ENCODE measurements at regions of chr12 and their contacts with region 1.

Region 1: DNA sequence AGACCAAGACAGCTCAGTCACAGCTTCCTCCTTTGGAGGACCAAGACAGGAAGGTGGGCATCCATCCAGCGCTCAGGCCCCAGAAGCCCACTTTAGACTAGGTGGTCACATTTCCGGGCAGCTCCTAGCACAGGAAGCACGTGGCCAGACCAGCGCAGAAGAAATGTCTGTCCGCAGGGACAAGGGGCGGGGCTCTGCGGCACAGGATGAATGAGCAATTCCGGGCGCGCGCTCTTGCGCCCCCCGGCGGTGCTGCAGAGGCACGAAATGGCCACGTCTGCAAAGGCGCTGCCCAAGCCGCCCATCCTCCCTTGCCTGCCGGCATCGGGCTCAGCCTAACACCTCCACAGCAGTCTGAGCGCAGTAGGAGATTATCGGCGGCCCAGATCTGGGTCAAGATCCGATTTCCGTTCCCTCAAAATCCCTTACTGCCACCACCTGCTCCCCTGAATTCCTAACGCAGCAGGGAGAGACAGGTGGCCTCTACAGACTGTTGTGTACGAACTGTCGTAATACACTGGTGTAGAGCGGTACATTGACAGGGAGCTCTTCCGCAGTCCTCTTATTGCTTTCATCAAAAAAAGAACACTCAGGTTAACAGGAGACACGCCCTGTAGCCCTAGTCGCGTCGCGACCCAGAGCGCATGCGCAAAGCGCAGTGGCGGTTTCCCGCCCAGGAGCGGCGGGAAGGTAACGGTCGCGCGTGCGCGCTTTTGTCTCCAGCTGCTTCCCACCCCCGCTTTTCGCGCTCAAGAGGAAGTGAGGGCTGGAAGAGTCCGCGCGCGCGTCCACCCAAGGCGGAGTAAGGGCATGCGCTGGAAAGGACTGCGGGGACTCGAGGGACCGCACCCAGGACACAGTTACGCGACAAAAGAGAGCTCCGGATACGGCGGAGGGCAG is 794 bp downstream of the TUBA1B start:
- DNase-seq: peak; percentile 96
- ATAC-seq: peak; percentile 58
- H3K4me3 Mint-ChIP-seq: peak overlapping the region; percentile 99
- H3K27ac Mint-ChIP-seq: peak overlapping the region; percentile 97
- H3K4me1 Mint-ChIP-seq: peaks cover 44% of the 10 kb centered on the region
- H3K27me3 Mint-ChIP-seq: no peaks in the 10 kb centered on the region

Region 2: DNA sequence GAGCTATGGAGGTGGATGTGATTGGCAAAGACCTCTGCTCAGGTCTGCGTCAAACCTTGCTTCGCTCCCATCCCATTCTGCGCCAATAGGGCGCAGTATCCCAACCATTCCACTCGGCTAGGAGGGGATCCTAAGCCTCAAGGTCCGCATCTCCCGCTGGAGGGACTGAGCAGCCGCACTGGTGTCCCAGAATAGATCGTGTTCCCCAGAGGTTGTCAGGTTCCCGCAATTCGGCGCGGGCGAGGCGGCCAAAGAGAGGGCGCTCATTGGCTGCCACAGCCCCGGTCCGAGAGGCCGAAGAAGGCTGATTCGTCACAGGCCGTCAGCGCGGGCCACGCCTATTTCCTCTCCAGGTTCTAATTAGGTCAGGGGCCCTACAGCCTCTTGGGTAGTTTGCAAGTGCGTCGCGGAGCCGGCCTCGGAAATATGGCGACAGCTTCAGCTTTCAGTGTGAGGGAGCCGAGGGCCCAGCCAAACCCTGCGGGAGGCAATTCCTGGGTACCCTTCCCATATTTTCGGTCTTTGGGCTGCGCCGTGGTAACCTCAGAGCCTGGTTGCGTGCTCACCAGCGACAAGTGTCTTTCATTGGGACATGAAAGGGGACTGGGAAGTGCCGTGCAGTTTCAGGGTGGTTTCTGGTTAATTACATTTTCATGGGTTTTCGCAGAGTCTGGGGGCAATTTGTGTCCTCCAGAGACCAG is 932.3 kb before region 1 on chr12:
- CTCF ChIA-PET with region 1: no interaction called
- POLR2A ChIA-PET with region 1: no interaction called
- intact Hi-C with region 1: loop called in 1 of 2 experiments (anchors 5 kb)
- DNase-seq: peak; percentile 97
- ATAC-seq: peak; percentile 98
- H3K4me3 Mint-ChIP-seq: peak overlapping the region; percentile 80
- H3K27ac Mint-ChIP-seq: peak overlapping the region; percentile 99
- H3K4me1 Mint-ChIP-seq: peaks cover 30% of the 10 kb centered on the region
- H3K27me3 Mint-ChIP-seq: peaks cover 4% of the 10 kb centered on the region

Region 3: GRCh38 chr12:49060237-49061156 is 69.9 kb before region 1 on chr12 and contains the start of gene KMT2D:
- CTCF ChIA-PET with region 1: interaction called, 10 read pairs
- POLR2A ChIA-PET with region 1: interaction called, 9 read pairs
- intact Hi-C with region 1: loop called (anchors 1 to 5 kb)
- DNase-seq: peak; percentile 94
- ATAC-seq: peak; percentile 75
- H3K4me3 Mint-ChIP-seq: peak within 1 kb of the TSS; percentile 98
- H3K27ac Mint-ChIP-seq: peak within 1 kb of the TSS; percentile 95
- H3K4me1 Mint-ChIP-seq: peaks cover 45% of the 10 kb centered on the region
- H3K27me3 Mint-ChIP-seq: no peaks in the 10 kb centered on the region
- total RNA-seq, gene KMT2D: 48.3 to 58.2 TPM

Region 4: DNA sequence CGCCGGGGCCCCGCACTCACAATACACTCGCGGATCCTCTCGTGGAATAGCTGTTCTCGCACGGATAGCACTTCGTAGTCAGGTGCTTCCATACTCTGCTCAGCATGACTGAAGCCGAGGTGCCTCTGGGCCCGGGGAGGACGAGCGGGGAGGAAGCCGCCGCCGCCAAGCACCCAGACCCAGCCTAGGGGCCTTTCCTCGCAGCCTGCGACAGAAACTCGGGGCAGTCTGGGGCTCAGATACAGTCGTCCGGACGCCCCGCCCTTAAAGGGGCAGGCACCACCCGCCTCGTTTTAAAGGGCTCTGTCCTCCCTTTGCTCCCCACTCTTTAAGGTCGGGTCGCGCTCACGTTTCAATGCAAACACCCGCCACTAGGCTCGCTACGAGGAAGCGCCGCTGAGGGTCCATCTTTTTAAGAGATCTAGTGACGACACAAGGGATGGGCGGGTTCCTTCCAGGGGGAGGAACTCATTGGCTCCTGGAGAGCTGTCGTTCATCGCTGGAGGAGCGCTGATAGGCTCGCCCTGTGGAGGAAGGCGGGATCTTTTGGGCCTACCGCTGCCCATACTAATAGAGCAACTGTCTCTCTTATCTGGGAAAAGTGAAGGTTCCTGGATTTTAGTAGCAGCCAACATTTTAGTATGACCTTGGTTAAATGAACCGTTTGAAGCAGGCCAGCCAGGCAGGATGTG is 19.8 kb before region 1 on chr12 and contains the start of gene LMBR1L:
- CTCF ChIA-PET with region 1: interaction called, 20 read pairs
- POLR2A ChIA-PET with region 1: interaction called, 40 read pairs
- intact Hi-C with region 1: loop called (anchors 1 kb)
- DNase-seq: peak; percentile 97
- ATAC-seq: peak; percentile 98
- H3K4me3 Mint-ChIP-seq: peak within 1 kb of the TSS; percentile 96
- H3K27ac Mint-ChIP-seq: peak within 1 kb of the TSS; percentile 98
- H3K4me1 Mint-ChIP-seq: peaks cover 29% of the 10 kb centered on the region
- H3K27me3 Mint-ChIP-seq: no peaks in the 10 kb centered on the region
- total RNA-seq, gene LMBR1L: 45.0 to 48.0 TPM

Region 5: DNA sequence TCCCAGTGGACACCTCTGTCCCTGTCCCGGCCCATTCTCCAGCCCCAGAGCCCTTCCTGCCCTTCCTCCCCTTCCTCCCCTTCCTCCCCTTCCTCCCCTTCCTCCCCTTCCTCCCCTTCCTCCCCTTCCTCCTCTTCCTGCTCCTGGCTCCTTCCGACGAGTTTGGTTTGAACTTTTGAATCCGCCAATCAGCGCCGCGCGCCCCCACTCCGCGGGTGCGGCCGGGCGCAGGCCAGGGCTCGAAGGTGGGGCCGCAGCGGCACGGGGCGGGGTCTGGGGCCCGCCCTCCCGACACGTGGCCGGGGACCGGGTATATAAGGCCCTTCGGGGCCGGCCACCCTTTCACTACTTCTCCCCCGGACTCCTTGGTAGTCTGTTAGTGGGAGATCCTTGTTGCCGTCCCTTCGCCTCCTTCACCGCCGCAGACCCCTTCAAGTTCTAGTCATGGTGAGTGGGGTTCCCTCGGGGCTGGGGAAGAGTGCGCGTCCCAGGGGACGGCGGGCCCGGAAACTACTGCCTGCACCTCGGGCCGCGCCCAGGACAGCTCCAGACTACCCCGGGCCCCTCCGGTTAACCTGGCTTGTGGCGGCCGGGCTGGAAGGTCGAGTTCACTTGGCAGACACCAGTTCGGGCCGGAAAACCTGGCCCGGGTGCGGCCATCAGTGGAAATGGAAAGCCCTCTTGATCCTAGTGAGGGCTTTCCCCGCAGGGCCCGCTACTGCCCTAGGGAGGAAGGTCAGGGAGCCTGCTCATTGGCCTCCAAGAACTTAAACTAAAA is 134.5 kb after region 1 on chr12 and contains the start of gene TUBA1C:
- CTCF ChIA-PET with region 1: no interaction called
- POLR2A ChIA-PET with region 1: interaction called, 13 read pairs
- intact Hi-C with region 1: loop called (anchors 1 to 10 kb)
- DNase-seq: peak; percentile 95
- ATAC-seq: peak; percentile 90
- H3K4me3 Mint-ChIP-seq: peak within 1 kb of the TSS; percentile 93
- H3K27ac Mint-ChIP-seq: peak within 1 kb of the TSS; percentile 96
- H3K4me1 Mint-ChIP-seq: peaks cover 47% of the 10 kb centered on the region
- H3K27me3 Mint-ChIP-seq: no peaks in the 10 kb centered on the region
- total RNA-seq, gene TUBA1C: 276 to 338 TPM

Region 6: GRCh38 chr12:49538510-49539403 is 408.4 kb after region 1 on chr12 and contains the start of gene KCNH3:
- CTCF ChIA-PET with region 1: no interaction called
- POLR2A ChIA-PET with region 1: no interaction called
- intact Hi-C with region 1: no loop called
- DNase-seq: peak; percentile 90
- ATAC-seq: peak; percentile 82
- H3K4me3 Mint-ChIP-seq: peak within 1 kb of the TSS; percentile 55
- H3K27ac Mint-ChIP-seq: no peak within 1 kb of the TSS
- H3K4me1 Mint-ChIP-seq: peaks cover 4% of the 10 kb centered on the region
- H3K27me3 Mint-ChIP-seq: peaks cover 17% of the 10 kb centered on the region
- total RNA-seq, gene KCNH3: 2.4 to 3.3 TPM

Region 7: GRCh38 chr12:49740930-49741881 is 610.8 kb after region 1 on chr12 and contains the start of gene TMBIM6:
- CTCF ChIA-PET with region 1: no interaction called
- POLR2A ChIA-PET with region 1: no interaction called
- intact Hi-C with region 1: loop called in 1 of 2 experiments (anchors 1 kb)
- DNase-seq: peak; percentile 99
- ATAC-seq: peak; percentile 93
- H3K4me3 Mint-ChIP-seq: peak within 1 kb of the TSS; percentile 89
- H3K27ac Mint-ChIP-seq: peak within 1 kb of the TSS; percentile 100
- H3K4me1 Mint-ChIP-seq: peaks cover 45% of the 10 kb centered on the region
- H3K27me3 Mint-ChIP-seq: no peaks in the 10 kb centered on the region
- total RNA-seq, gene TMBIM6: 378 to 450 TPM

Region 8: GRCh38 chr12:49930515-49931288 is 800.3 kb after region 1 on chr12:
- CTCF ChIA-PET with region 1: no interaction called
- POLR2A ChIA-PET with region 1: no interaction called
- intact Hi-C with region 1: no loop called
- DNase-seq: no peak
- ATAC-seq: peak; percentile 68
- H3K4me3 Mint-ChIP-seq: no peak overlapping the region
- H3K27ac Mint-ChIP-seq: no peak overlapping the region
- H3K4me1 Mint-ChIP-seq: peaks cover 7% of the 10 kb centered on the region
- H3K27me3 Mint-ChIP-seq: no peaks in the 10 kb centered on the region